Dorsolateral prefrontal cortex (tissue), 120 donors: ENCODE measurements at regions of chr15 and their contacts with region 1.

Region 1: DNA sequence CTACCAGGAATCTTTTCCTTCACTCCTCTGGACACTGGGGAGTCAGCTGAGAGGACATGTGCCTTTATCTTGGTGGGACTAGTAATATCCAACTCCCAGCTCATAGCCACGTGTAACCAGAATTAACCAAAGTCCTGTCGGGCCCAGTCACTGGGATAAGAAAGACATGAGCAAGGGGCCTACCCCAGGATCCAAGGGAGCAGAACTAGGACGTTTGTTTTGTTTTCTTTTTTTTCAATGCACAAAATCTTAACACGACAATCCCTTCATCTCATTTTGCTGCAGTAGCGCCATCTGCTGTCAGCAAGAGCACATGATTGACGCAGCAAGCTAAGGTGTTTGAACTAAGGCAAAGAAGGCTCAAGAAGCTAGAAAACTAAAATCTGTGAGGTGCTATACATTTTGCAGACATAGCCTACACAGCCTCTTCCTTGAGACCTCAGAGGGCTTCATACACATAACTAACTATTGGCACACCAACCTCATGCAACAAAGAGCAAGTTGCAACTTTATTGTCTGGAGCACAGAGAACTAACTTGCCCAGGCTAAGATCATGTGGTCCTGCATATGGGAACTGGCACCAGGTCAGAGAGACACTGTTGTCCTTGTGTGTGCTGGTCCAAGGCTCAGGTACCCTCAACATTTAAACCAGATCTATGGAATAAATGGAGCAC is 43.6 kb downstream of the RLBP1 start:
- DNase-seq: peak in 8 of 10 donors; percentile 40 to 75 (median 65)
- H3K4me3 ChIP-seq: peak overlapping the region in 1 of 59 donors; percentile 12
- H3K27ac ChIP-seq: peak overlapping the region in 48 of 59 donors; percentile 5 to 84 (median 56)
- H3K27me3 ChIP-seq: no peaks in the 10 kb centered on the region
- CTCF ChIP-seq: peak; percentile 80 to 97 (median 93)

Region 2: GRCh38 chr15:89057504-89058133 is 120.2 kb before region 1 on chr15:
- intact Hi-C with region 1: loop called (anchors 1 to 5 kb)
- DNase-seq: peak; percentile 67 to 86 (median 80)
- H3K4me3 ChIP-seq: no peak overlapping the region
- H3K27ac ChIP-seq: peak overlapping the region in 19 of 59 donors; percentile 2 to 84 (median 44)
- H3K27me3 ChIP-seq: no peaks in the 10 kb centered on the region
- CTCF ChIP-seq: peak; percentile 88 to 100 (median 99)

Region 3: GRCh38 chr15:89090791-89091626 is 86.8 kb before region 1 on chr15:
- intact Hi-C with region 1: loop called in 1 of 2 experiments (anchors 10 kb)
- DNase-seq: peak in 7 of 10 donors; percentile 51 to 66 (median 62)
- H3K4me3 ChIP-seq: peak overlapping the region; percentile 18 to 100 (median 95)
- H3K27ac ChIP-seq: peak overlapping the region in 58 of 59 donors; percentile 69 to 97 (median 90)
- H3K27me3 ChIP-seq: no peaks in the 10 kb centered on the region
- CTCF ChIP-seq: peak in 18 of 56 donors; percentile 3 to 36 (median 18)

Region 4: DNA sequence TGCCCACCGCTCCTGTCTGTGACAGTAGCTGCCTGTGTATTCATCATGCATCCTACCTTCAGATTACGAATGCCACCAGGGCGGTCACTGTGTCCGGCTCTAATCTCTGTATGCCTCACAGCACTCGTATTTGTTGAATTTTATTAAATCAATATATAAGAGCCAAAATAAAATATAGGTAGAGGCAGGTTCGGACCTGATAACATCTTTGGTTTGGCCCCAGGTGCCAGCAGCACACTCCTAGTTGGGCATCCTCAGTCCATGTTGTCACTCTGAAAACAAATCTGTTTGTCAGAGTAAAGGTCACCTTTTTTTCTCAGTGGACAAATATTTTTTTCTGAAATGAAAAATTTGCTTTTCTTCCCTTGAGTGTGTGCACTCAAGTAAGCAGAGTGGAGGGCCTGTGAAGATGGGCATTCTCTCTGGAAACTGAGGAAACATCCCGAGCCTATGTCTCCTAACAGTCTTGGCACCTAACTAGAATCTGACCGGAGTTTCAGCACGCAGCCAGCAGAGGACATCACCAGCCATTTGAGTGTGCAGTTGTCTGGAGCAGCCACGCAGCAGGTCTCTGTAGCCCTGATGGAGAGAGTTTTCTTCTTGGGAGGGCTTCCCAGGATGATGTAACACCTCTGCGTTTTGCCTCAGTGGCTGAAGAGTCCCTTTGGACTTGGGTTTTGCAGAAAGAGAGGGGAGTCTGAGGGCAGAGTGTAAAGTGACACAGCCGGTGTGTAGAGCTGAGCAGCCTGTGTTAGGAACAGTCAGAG is 38.2 kb before region 1 on chr15:
- intact Hi-C with region 1: loop called in 1 of 2 experiments (anchors 2 kb)
- DNase-seq: peak; percentile 40 to 73 (median 64)
- H3K4me3 ChIP-seq: peak overlapping the region in 2 of 59 donors; percentile 1 to 8
- H3K27ac ChIP-seq: peak overlapping the region in 58 of 59 donors; percentile 8 to 95 (median 85)
- H3K27me3 ChIP-seq: no peaks in the 10 kb centered on the region
- CTCF ChIP-seq: peak in 48 of 56 donors; percentile 19 to 65 (median 47)